ENCODE measurements at regions of chr5 and their contacts with region 1.

Region 1: DNA sequence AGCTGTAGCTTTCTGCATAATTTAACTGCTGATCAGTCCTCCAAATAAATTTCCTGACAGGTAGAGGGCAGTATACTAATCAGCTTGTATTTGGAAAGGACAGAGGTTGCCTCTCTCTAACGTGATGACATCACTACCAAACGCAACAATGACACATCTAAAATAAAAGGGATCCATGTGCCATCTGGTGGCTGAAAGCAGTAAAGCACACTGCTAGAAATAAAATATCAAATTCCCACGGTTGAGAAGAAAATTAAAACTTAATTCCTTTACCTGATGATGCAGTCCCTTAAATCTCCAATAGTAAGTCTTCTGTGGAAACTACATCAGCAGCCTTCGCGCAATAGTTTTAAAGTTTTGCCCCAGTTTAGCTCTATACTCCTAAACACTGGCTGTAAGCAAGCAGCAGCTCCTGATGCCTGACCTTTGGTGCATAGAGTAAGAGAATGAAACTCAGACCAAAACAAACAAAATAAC is 54.5 kb downstream of the DIAPH1 start:
- DNase-seq: peak; percentile 4 to 94 (median 63)
- ATAC-seq: peak; percentile 83 to 92 (median 88)
- H3K4me3 ChIP-seq: no peak overlapping the region
- H3K4me3 Mint-ChIP-seq: no peak overlapping the region
- H3K27ac ChIP-seq: peak overlapping the region; percentile 65
- H3K27ac Mint-ChIP-seq: peak overlapping the region; percentile 77 to 84
- H3K4me1 ChIP-seq: peaks cover 2% of the 10 kb centered on the region in 2 experiments
- H3K4me1 Mint-ChIP-seq: peaks cover 41 to 45% (median 42%) of the 10 kb centered on the region in 3 donors
- H3K27me3 ChIP-seq: no peaks in the 10 kb centered on the region
- H3K27me3 Mint-ChIP-seq: no peaks in the 10 kb centered on the region

Region 2: GRCh38 chr5:141320225-141321169 is 243.8 kb before region 1 on chr5 and contains the start of gene TAF7:
- CTCF ChIA-PET with region 1: interaction called, 6 to 53 read pairs
- POLR2A ChIA-PET with region 1: interaction called, 3 to 11 read pairs
- DNase-seq: peak; percentile 82 to 96 (median 89)
- ATAC-seq: peak; percentile 92 to 93 (median 92)
- H3K4me3 ChIP-seq: peak within 1 kb of the TSS; percentile 90 to 98
- H3K4me3 Mint-ChIP-seq: peak within 1 kb of the TSS; percentile 97 to 99 (median 99)
- H3K27ac ChIP-seq: peak within 1 kb of the TSS; percentile 98
- H3K27ac Mint-ChIP-seq: peak within 1 kb of the TSS; percentile 97 to 98
- H3K4me1 ChIP-seq: peaks cover 2 to 19% of the 10 kb centered on the region in 2 experiments
- H3K4me1 Mint-ChIP-seq: peaks cover 30 to 35% (median 33%) of the 10 kb centered on the region in 3 donors
- H3K27me3 ChIP-seq: no peaks in the 10 kb centered on the region
- H3K27me3 Mint-ChIP-seq: peaks cover 2 to 3% of the 10 kb centered on the region in 2 donors
- total RNA-seq, gene TAF7: 83.7 to 103 (median 101) TPM

Region 3: DNA sequence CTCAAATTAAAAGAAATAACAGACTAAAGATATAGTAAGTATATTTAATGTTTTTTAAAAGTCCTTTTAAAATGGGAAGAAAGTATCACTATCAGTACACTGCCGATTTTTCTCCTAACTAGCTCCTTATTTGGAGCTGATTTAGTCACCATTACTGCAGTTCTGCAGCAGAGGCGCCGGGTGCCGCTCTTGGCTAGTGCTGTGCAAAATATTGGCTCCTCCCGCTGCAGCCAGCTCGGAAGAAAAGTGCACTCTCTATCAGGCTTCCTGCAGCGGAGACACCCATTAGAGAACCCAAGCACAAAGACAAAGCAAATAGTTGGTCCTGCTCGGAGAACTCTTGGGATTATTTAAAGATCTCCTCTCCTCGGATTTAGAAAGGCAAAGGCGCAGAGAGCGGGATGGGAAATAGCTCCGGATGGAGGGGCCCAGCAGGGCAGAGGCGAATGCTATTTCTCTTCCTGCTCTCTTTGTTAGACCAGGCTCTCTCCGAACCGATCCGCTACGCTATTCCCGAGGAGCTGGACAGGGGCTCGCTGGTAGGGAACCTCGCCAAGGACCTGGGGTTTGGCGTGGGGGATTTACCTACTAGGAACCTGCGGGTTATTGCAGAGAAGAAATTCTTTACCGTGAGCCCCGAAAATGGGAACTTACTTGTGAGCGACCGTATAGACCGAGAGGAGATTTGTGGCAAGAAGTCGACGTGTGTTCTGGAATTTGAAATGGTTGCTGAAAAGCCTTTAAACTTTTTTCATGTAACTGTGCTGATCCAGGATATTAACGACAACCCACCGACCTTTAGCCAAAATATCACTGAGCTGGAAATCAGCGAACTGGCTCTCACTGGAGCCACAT is 194.0 kb before region 1 on chr5 and contains the start of gene PCDHGB3:
- CTCF ChIA-PET with region 1: interaction called, 7 to 19 read pairs
- POLR2A ChIA-PET with region 1: no interaction called
- DNase-seq: peak in 19 of 35 experiments; percentile 6 to 51 (median 25)
- ATAC-seq: peak in 3 of 4 experiments; percentile 52 to 85 (median 82)
- H3K4me3 ChIP-seq: peak within 1 kb of the TSS; percentile 12 to 58
- H3K4me3 Mint-ChIP-seq: peak within 1 kb of the TSS; percentile 66 to 80 (median 77)
- H3K27ac ChIP-seq: no peak within 1 kb of the TSS
- H3K27ac Mint-ChIP-seq: no peak within 1 kb of the TSS
- H3K4me1 ChIP-seq: peaks cover 0 to 7% of the 10 kb centered on the region in 2 experiments
- H3K4me1 Mint-ChIP-seq: peaks cover 7 to 9% (median 8%) of the 10 kb centered on the region in 3 donors
- H3K27me3 ChIP-seq: peaks cover 32 to 61% of the 10 kb centered on the region in 2 experiments
- H3K27me3 Mint-ChIP-seq: peaks cover 56 to 84% of the 10 kb centered on the region in 2 donors
- total RNA-seq, gene PCDHGB3: 0.20 to 0.85 (median 0.41) TPM

Region 4: DNA sequence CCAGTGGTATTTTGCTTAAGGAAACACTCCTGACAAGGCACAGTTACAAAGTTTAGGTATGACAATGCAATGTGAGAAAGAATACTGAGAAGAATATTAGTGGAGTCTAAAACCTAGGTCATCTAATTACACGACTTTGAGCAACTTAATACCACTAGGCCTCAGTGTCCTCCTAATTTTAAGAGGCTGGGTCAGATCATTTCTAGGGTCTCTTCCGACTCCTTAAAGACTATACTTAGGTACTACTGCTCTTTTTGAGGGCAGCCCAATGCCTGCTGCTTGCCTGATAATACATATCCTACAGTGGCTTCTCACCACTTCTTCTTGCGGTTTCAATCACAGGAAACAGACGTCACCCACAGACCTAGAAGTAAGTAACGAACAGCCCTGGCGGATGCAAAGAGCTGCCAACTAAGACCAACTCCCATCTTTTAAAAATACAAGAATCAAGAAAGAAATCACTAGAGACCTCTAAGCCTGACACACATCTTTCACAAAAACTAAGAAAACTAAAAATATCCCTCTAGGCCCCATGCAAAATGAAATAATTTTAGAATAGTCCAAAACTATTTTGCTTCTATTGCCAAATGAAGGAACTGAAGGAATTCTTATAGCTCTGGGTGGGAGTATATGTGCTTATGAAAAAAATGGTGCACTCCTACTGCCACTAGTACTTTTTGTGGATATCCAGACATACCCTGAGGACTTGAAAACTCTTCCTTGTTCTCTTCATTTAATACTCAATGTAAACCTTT is 41.4 kb after region 1 on chr5:
- CTCF ChIA-PET with region 1: interaction called, 5 to 11 read pairs
- POLR2A ChIA-PET with region 1: no interaction called
- DNase-seq: peak; percentile 35 to 92 (median 75)
- ATAC-seq: peak; percentile 97 to 98 (median 98)
- H3K4me3 ChIP-seq: peak overlapping the region; percentile 32 to 38
- H3K4me3 Mint-ChIP-seq: peak overlapping the region; percentile 63 to 73 (median 72)
- H3K27ac ChIP-seq: peak overlapping the region; percentile 83
- H3K27ac Mint-ChIP-seq: peak overlapping the region; percentile 88 to 92
- H3K4me1 ChIP-seq: peaks cover 49 to 86% of the 10 kb centered on the region in 2 experiments
- H3K4me1 Mint-ChIP-seq: peaks cover 93 to 96% (median 94%) of the 10 kb centered on the region in 3 donors
- H3K27me3 ChIP-seq: no peaks in the 10 kb centered on the region
- H3K27me3 Mint-ChIP-seq: no peaks in the 10 kb centered on the region

Region 5: DNA sequence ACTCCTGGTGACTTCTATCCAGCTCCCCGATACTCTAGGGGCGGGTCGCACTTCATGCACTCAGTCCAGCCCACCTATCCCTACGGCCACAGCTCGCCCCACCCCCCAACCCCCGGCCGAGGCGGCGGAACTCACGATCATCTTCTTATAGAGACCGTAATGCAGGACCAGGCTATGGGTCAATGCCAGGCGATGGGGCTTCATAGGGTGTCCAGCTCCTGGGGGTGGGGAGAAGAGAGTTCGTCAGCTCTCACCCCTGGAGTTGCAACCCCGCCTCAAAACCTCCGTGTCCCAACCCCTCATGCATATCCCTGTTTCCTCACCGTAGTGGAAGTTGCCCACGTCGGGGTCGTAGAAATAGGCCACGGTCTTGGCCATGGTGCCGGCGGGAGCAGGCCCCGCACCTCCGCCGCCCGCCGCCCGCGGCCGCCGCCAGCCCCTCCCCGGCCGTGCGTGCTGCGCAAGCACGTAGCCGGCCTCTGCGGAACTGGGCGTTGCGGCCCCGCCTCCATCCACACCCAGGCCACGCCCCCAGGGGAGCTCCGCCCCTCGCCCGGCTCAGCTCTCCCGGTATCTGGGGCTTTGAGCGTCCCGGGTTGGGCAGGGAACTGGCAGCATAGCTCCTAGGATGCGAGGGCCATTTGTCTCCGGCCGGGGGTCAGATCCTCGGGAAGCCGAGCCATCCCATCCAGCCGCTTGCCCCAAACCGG is 72.3 kb after region 1 on chr5 and contains the starts of genes HDAC3 and RELL2:
- CTCF ChIA-PET with region 1: interaction called, 3 to 23 read pairs
- POLR2A ChIA-PET with region 1: no interaction called
- DNase-seq: peak; percentile 78 to 97 (median 90)
- ATAC-seq: peak; percentile 81 to 93 (median 89)
- H3K4me3 ChIP-seq: peak within 1 kb of the TSS; percentile 90 to 99
- H3K4me3 Mint-ChIP-seq: peak within 1 kb of the TSS; percentile 84 to 92 (median 91)
- H3K27ac ChIP-seq: peak within 1 kb of the TSS; percentile 79
- H3K27ac Mint-ChIP-seq: peak within 1 kb of the TSS; percentile 87 to 93
- H3K4me1 ChIP-seq: peaks cover 7 to 40% of the 10 kb centered on the region in 2 experiments
- H3K4me1 Mint-ChIP-seq: peaks cover 40 to 48% (median 44%) of the 10 kb centered on the region in 3 donors
- H3K27me3 ChIP-seq: no peaks in the 10 kb centered on the region
- H3K27me3 Mint-ChIP-seq: no peaks in the 10 kb centered on the region
- total RNA-seq, gene HDAC3: 68.5 to 78.5 (median 73.8) TPM
- total RNA-seq, gene RELL2: 15.3 to 30.7 (median 26.0) TPM

Region 6: GRCh38 chr5:141976176-141976575 is 411.9 kb after region 1 on chr5:
- CTCF ChIA-PET with region 1: no interaction called
- POLR2A ChIA-PET with region 1: no interaction called
- DNase-seq: no peak
- ATAC-seq: no peak
- H3K4me3 ChIP-seq: no peak overlapping the region
- H3K4me3 Mint-ChIP-seq: no peak overlapping the region
- H3K27ac ChIP-seq: no peak overlapping the region
- H3K27ac Mint-ChIP-seq: no peak overlapping the region
- H3K4me1 ChIP-seq: peaks cover 0 to 2% of the 10 kb centered on the region in 2 experiments
- H3K4me1 Mint-ChIP-seq: peaks cover 18 to 34% (median 26%) of the 10 kb centered on the region in 3 donors
- H3K27me3 ChIP-seq: no peaks in the 10 kb centered on the region
- H3K27me3 Mint-ChIP-seq: no peaks in the 10 kb centered on the region